ENCODE measurements at regions of chr5 and their contacts with region 1.

Region 1: GRCh38 chr5:94968507-94969095 is 316.3 kb downstream of the MCTP1 start:
- DNase-seq: peak; percentile 33
- CTCF ChIP-seq: peak; percentile 60

Region 2: DNA sequence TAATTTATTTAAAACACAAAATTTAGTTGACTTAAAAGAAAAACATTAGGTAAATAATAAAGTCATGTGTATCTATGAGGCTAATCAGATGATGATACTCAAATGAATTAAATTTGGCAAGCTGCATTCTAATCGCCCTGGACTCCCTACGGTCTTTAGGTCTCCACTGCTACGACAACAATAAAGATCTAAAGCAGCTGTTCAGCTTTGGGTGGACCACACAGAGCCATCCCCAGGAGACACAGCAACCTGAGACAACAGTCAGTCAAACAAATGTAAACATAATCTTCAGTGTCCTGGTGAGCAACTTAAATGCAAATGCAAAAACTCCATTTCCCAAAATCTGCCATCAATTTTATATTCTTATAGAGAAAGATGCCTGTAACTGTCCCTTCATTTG is 250.8 kb after region 1 on chr5:
- in situ Hi-C with region 1: no loop called
- DNase-seq: no peak
- CTCF ChIP-seq: no peak

Region 3: GRCh38 chr5:95261437-95262175 is 293.0 kb after region 1 on chr5:
- in situ Hi-C with region 1: loop called (anchors 25 kb)
- DNase-seq: no peak
- CTCF ChIP-seq: peak; percentile 54